ENCODE measurements at regions of chr4 and their contacts with region 1.

Region 1: GRCh38 chr4:166091912-166092510 is 219.0 kb downstream of the TLL1 start:
- DNase-seq: no peak
- H3K4me3 ChIP-seq: no peak overlapping the region
- H3K27ac ChIP-seq: no peak overlapping the region
- H3K27me3 ChIP-seq: peaks cover 0 to 7% (median 0%) of the 10 kb centered on the region in 45 donors
- CTCF ChIP-seq: peak; percentile 35 to 92 (median 72)

Region 2: GRCh38 chr4:165537028-165537648 is 554.9 kb before region 1 on chr4:
- intact Hi-C with region 1: loop called (anchors 5 kb)
- DNase-seq: peak in 1 of 10 donors; percentile 6
- H3K4me3 ChIP-seq: no peak overlapping the region
- H3K27ac ChIP-seq: no peak overlapping the region
- H3K27me3 ChIP-seq: peaks cover 0 to 10% (median 0%) of the 10 kb centered on the region in 45 donors
- CTCF ChIP-seq: peak; percentile 62 to 97 (median 86)

Region 3: DNA sequence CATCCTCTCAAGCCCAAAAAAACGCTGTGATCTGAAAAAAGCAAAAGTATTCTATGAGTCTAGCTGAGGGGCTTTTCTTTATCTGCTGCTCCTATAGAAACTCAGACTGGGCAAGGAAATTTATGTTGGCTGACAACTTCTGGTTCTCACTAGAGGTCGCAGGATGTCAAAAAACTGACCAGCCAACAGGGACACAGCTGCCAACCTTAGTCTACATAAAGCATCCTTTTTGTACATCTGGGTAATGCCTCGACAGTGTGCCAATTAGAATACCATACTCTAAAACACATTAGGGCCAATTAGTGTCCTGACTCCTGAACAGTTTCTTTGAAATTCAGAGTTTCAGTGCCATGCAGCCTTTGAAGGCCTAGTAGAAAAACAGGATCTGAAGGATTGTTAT is 227.7 kb before region 1 on chr4:
- intact Hi-C with region 1: loop called in 1 of 2 experiments (anchors 10 kb)
- DNase-seq: no peak
- H3K4me3 ChIP-seq: no peak overlapping the region
- H3K27ac ChIP-seq: no peak overlapping the region
- H3K27me3 ChIP-seq: no peaks in the 10 kb centered on the region
- CTCF ChIP-seq: peak in 7 of 56 donors; percentile 9 to 19 (median 11)

Region 4: DNA sequence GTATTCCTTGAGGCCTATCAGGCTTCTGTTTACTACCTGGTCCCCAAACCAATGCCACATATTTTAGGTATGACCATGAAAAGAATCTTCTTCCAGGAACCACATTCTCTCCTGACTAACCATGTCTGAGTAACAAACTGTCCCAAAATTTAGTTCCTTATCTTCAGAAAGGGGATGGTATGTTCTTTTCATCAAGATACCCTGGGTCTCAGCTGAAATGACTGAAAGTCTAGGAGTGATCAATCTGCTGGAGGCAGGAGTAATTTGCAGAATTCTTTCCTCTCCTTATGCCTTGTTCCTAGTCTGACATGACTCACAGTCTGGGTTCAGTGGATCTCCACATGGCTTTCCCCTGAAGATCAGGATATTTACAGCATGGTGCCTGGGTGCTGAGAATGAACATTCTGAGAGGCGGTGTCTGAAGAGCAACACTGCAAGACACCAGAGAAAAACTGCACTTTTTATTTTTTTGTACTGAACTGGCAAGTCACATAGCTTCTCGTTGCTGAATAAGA is 446.5 kb after region 1 on chr4:
- intact Hi-C with region 1: no loop called
- DNase-seq: no peak
- H3K4me3 ChIP-seq: no peak overlapping the region
- H3K27ac ChIP-seq: no peak overlapping the region
- H3K27me3 ChIP-seq: no peaks in the 10 kb centered on the region
- CTCF ChIP-seq: no peak

Measured in dorsolateral prefrontal cortex (tissue), 120 donors.